Dendritic cell treated with granulocyte-macrophage colony-stimulating factor and Interleukin-4, amounts not matched to agents 40 ng/mL and 50 ng/mL, for 4 days (primary cell): ENCODE measurements at regions of chr11 and their contacts with region 1.

Region 1: GRCh38 chr11:114036156-114036811 is 23.2 kb upstream of the ZBTB16 start:
- H3K4me3 Mint-ChIP-seq: peak overlapping the region; percentile 50
- H3K27ac Mint-ChIP-seq: no peak overlapping the region
- H3K4me1 Mint-ChIP-seq: peaks cover 23% of the 10 kb centered on the region
- H3K27me3 Mint-ChIP-seq: peaks cover 18% of the 10 kb centered on the region

Region 2: DNA sequence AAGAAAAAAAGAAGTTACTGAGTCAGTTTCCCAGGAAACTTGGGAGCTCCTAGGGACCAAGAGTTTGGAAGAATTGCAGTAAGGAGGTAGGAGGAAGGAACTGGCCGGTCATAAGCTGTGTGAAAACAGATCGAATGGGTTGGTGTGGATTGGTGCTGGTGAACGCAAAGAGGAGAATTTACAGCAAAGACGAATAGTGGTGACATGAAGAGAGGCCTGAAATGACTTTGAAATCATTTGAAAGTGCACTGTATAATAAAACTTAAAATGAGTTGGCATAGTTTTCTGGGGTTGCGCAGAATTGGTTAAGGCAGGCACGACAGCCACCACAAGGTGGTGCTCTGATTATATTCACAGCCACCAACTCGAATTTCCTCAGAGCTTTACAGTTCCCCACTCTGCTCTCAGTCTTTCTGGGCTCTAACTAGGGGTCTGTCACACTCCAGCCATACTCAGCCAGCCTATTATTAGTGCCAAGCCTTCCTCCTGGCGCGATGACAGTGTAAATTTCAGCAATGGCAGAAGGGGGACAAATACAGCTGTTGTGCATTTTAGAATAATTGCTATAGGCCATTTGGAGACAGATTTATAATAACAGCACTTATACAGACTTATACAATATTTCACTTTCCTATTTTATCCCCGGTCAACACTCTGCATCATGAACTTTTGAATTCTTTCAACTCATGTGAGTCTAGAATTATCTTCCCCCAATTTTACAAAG is 140.0 kb before region 1 on chr11:
- intact Hi-C with region 1: loop called (anchors 2 kb)
- H3K4me3 Mint-ChIP-seq: no peak overlapping the region
- H3K27ac Mint-ChIP-seq: no peak overlapping the region
- H3K4me1 Mint-ChIP-seq: peaks cover 6% of the 10 kb centered on the region
- H3K27me3 Mint-ChIP-seq: no peaks in the 10 kb centered on the region

Region 3: DNA sequence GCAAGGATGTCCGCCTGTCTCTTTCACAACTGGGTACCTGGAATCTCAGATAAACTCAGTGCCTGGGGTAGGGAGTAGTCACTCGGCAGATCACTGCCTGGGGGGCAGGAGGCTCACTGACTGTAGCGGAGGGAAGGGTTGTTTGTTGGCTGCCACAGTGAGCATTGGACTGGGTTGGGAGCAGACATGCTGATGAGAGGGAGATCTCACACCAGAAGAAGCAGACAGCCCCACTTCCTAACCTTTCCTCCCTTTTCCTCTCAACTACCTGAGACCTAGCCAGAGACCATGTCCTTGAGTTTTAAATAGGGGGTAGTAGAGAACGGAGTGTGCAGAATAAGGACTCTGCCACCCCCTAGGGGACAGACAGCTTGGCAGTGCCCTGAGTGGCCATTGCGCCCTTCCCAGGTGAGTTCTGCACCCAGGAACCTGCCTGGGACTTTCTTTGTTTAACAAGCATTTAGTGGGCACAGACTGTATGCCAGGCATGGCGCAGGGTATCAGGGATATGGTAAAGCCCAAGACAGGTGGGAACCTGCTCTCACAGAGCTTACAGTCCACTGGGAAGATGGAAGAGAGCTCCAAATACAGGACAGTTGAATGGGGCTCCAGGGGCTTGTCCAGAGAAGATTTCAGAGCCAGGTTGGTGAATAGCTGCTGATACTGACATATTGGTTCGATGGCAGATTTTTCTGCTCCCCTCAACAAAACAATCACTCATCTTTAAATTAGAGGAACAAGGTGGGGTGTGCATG is 144.2 kb after region 1 on chr11:
- intact Hi-C with region 1: loop called (anchors 5 kb)
- H3K4me3 Mint-ChIP-seq: no peak overlapping the region
- H3K27ac Mint-ChIP-seq: no peak overlapping the region
- H3K4me1 Mint-ChIP-seq: peaks cover 22% of the 10 kb centered on the region
- H3K27me3 Mint-ChIP-seq: no peaks in the 10 kb centered on the region